Endothelial cell of umbilical vein (primary cell): ENCODE measurements at regions of chr10 and their contacts with region 1.

Region 1: DNA sequence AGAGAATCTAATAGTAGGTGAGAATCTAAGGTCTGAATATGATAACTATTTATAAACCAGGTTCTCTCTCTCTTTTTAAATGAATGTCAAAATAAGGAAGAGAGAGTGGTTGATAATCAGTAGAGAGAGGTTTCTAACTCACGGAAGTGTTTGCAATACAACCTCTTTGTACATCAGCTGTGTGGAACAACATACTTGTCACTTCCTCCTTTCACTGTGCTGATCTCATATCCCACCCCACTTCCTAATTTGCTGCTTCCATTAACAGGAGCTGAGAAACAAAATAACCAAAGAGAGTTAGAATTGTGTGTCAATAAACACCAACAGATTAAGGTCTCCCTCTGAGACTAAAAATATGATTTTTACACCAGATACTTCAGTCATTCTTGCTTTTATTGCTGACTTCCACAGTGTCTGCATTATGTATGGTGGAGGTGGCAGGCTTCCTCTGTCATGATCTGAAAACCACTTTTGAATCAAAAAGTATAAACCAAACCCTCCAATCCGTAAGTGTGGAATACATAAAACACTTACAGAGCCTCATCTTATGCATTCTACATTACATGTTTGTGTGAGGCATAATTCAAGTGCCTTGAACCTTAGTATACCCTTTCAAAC is 25.0 kb downstream of the CACUL1 start:
- DNase-seq: peak; percentile 67
- H3K4me3 ChIP-seq: no peak overlapping the region
- H3K27ac ChIP-seq: peak overlapping the region; percentile 64
- H3K4me1 ChIP-seq: peaks cover 21% of the 10 kb centered on the region
- H3K27me3 ChIP-seq: no peaks in the 10 kb centered on the region
- CTCF ChIP-seq: no peak
- POLR2A ChIP-seq: no peak

Region 2: DNA sequence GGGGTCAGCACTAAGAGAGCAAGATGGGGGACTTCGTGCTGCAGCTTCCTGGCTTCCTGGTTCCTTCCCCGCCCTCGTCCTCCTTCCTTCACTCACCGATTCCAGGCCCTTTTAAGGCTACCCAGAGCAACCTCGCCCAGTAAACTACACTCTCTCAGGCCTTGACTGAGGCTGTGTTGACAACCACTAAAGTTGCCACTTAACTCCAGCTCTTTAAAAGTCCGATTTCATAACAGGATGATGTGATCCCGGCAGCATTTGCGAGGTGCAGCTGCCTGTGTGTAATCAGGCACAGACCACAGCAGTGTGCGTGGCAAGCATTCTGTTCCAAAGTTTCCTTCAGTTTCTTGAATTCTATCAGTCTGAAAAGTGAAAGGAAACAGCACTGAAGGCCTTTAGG is 793.6 kb before region 1 on chr10:
- CTCF ChIA-PET with region 1: no interaction called
- POLR2A ChIA-PET with region 1: no interaction called
- dilution Hi-C with region 1: no loop called
- intact Hi-C with region 1: no loop called
- DNase-seq: no peak
- H3K4me3 ChIP-seq: no peak overlapping the region
- H3K27ac ChIP-seq: no peak overlapping the region
- H3K4me1 ChIP-seq: no peaks in the 10 kb centered on the region
- H3K27me3 ChIP-seq: no peaks in the 10 kb centered on the region
- CTCF ChIP-seq: no peak
- POLR2A ChIP-seq: no peak

Region 3: DNA sequence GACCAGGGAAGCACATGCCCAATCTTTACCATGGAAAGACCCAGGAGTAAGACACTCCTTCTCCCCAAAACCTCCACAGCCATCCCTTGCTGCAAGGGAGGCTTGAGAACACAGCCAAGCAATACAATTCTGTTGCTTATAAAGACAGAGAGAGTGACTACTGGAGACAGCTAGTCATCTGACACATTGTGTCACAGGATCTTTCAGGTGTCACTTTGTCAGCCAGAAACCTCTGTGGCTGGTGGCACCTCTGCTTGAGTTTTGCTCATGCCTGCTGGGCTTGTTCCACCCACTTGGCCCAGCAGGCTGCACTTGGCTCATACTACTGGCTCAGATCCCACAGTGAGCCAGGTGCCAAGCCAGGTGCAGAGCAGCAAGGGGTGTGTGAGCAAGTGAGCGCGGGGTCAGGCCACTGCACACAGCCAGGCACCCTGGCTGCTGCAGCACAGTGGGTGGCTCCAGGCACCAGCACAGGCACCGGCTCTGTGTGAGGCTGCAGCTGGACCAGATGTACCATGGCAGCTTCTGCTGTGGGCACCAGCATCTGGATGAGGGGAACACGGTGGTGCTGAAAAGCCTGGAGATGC is 121.9 kb before region 1 on chr10:
- CTCF ChIA-PET with region 1: no interaction called
- POLR2A ChIA-PET with region 1: no interaction called
- dilution Hi-C with region 1: no loop called
- intact Hi-C with region 1: no loop called
- DNase-seq: no peak
- H3K4me3 ChIP-seq: no peak overlapping the region
- H3K27ac ChIP-seq: no peak overlapping the region
- H3K4me1 ChIP-seq: no peaks in the 10 kb centered on the region
- H3K27me3 ChIP-seq: peaks cover 0 to 2% of the 10 kb centered on the region in 2 experiments
- CTCF ChIP-seq: no peak
- POLR2A ChIP-seq: no peak

Region 4: GRCh38 chr10:118742782-118743181 is 13.0 kb after region 1 on chr10:
- CTCF ChIA-PET with region 1: interaction called, 5 read pairs
- POLR2A ChIA-PET with region 1: no interaction called
- dilution Hi-C with region 1: no loop called
- intact Hi-C with region 1: loop called (anchors 1 kb)
- DNase-seq: no peak
- H3K4me3 ChIP-seq: no peak overlapping the region
- H3K27ac ChIP-seq: no peak overlapping the region
- H3K4me1 ChIP-seq: no peaks in the 10 kb centered on the region
- H3K27me3 ChIP-seq: no peaks in the 10 kb centered on the region
- CTCF ChIP-seq: no peak
- POLR2A ChIP-seq: no peak